ENCODE measurements at regions of chr6 and their contacts with region 1.

Region 1: GRCh38 chr6:16761471-16762267 is 409 bp upstream of the ATXN1 start:
- DNase-seq: peak; percentile 95 to 96
- H3K4me3 ChIP-seq: peak overlapping the region; percentile 9 to 90 (median 44)
- H3K27ac ChIP-seq: peak overlapping the region; percentile 93 to 99 (median 98)
- H3K4me1 ChIP-seq: peaks cover 30% of the 10 kb centered on the region in 2 donors
- H3K27me3 ChIP-seq: no peaks in the 10 kb centered on the region
- CTCF ChIP-seq: peak in 3 of 6 experiments; percentile 19 to 36 (median 32)
- POLR2A ChIP-seq: peak in 1 of 2 donors; percentile 79

Region 2: DNA sequence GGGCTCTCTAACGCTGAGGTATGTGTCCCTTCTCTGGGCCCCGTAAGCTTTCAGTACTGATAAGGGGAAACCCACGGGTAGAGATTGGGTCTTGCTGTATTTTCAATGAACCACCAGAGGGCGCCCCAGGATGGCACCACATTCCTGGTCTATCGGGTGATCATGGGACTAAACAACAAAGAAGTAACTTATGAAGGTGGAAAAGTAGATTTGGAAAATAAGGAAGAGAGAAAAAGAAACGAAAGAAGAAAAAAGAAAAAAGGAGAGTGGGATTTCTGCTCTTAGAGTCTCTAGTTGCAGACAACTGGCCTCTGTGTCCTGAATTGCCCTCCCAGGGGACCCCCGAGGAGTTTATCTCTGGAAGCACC is 429.5 kb before region 1 on chr6:
- intact Hi-C with region 1: loop called (anchors 5 kb)
- DNase-seq: peak; percentile 80 to 87
- H3K4me3 ChIP-seq: no peak overlapping the region
- H3K27ac ChIP-seq: peak overlapping the region in 2 of 3 donors; percentile 35 to 36
- H3K4me1 ChIP-seq: peaks cover 21 to 33% of the 10 kb centered on the region in 2 donors
- H3K27me3 ChIP-seq: no peaks in the 10 kb centered on the region
- CTCF ChIP-seq: peak; percentile 74 to 95 (median 90)
- POLR2A ChIP-seq: no peak

Region 3: DNA sequence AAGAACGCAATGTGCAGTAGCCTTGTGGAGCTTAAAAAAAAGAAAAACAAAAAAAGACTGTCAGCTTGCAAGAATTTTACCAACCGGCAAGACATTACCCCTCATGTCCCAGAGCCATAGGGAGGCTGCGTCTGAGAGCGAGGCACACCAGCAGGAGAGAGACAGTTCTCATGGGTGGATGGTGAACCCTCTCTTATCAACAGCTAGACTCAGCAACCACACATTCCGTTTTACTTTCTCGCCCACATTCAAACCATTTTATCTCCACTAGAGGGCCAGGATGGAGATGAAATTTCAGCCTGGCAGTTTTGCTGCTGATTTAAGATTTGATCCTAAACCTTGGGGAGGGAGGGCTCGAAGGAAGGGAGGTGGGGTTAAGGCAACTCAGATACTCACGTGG is 247.4 kb before region 1 on chr6:
- intact Hi-C with region 1: loop called (anchors 5 kb)
- DNase-seq: no peak
- H3K4me3 ChIP-seq: no peak overlapping the region
- H3K27ac ChIP-seq: no peak overlapping the region
- H3K4me1 ChIP-seq: peaks cover 20 to 39% of the 10 kb centered on the region in 2 donors
- H3K27me3 ChIP-seq: no peaks in the 10 kb centered on the region
- CTCF ChIP-seq: peak in 4 of 6 experiments; percentile 39 to 49 (median 46)
- POLR2A ChIP-seq: no peak

Region 4: DNA sequence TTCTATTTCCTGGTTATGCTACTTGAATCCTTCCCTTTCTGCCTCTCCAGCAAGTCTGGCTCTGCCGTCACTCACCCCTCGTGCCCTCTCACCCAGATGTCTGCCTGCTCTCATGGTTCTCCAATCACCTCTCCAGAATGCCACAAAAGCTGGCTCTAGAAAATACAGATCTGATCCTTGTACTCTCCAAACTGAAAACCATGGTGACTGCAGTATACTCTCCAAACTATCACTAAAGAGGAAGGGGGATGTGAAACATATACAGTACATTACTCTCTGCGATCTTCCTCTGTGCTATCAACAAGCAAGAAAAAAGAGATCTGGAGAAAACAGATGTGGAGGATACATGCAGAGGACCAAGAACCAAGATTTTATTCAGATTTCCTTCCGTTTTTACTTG is 91.5 kb before region 1 on chr6:
- intact Hi-C with region 1: loop called (anchors 10 kb)
- DNase-seq: peak; percentile 60 to 63
- H3K4me3 ChIP-seq: no peak overlapping the region
- H3K27ac ChIP-seq: peak overlapping the region in 2 of 3 donors; percentile 44 to 67
- H3K4me1 ChIP-seq: peaks cover 40 to 44% of the 10 kb centered on the region in 2 donors
- H3K27me3 ChIP-seq: no peaks in the 10 kb centered on the region
- CTCF ChIP-seq: no peak
- POLR2A ChIP-seq: no peak